GM12878 (cell line): ENCODE measurements at regions of chr4 and their contacts with region 1.

Region 1: DNA sequence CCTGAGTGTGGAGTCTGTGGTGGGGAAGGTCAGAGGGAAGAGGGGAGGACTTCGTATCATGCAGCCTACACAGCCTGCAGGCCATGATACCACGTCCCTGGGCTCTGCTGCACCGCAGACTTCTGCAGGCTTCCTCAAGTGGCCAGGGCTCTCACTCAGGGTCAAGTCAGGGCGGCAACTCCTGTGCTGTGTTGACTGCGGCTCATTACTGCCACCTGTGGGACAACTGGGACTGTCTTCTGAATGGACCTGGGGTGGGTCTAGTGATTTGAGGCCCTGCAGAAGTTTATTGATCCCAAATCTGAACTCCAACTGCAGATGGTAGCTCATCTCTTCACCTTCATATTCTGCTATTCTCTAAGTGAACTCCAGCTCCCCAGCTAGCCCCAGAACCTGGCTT is 167.1 kb downstream of the NSUN7 start:
- DNase-seq: no peak
- ATAC-seq: peak; percentile 97
- H3K4me3 ChIP-seq: no peak overlapping the region
- H3K27ac ChIP-seq: no peak overlapping the region
- H3K4me1 ChIP-seq: no peaks in the 10 kb centered on the region
- H3K27me3 ChIP-seq: no peaks in the 10 kb centered on the region; a peak in 1 of 4 replicates
- CTCF ChIP-seq: peak; percentile 43 to 64 (median 60)
- EP300 ChIP-seq: no peak
- POLR2A ChIP-seq: no peak
- RAD21 ChIP-seq: peak; percentile 42

Region 2: GRCh38 chr4:40736910-40737309 is 180.0 kb before region 1 on chr4:
- CTCF ChIA-PET with region 1: interaction called, 53 read pairs
- POLR2A ChIA-PET with region 1: no interaction called
- RAD21 ChIA-PET with region 1: no interaction called
- SMC1A ChIA-PET with region 1: interaction called, 4 read pairs
- in situ Hi-C with region 1: no loop called
- intact Hi-C with region 1: no loop called
- DNase-seq: no peak
- ATAC-seq: peak; percentile 84
- H3K4me3 ChIP-seq: no peak overlapping the region
- H3K27ac ChIP-seq: no peak overlapping the region
- H3K4me1 ChIP-seq: no peaks in the 10 kb centered on the region
- H3K27me3 ChIP-seq: no peaks in the 10 kb centered on the region
- CTCF ChIP-seq: peak; percentile 43 to 68 (median 47); a peak in 5 of 6 replicates
- EP300 ChIP-seq: no peak
- POLR2A ChIP-seq: no peak
- RAD21 ChIP-seq: peak; percentile 94

Region 3: DNA sequence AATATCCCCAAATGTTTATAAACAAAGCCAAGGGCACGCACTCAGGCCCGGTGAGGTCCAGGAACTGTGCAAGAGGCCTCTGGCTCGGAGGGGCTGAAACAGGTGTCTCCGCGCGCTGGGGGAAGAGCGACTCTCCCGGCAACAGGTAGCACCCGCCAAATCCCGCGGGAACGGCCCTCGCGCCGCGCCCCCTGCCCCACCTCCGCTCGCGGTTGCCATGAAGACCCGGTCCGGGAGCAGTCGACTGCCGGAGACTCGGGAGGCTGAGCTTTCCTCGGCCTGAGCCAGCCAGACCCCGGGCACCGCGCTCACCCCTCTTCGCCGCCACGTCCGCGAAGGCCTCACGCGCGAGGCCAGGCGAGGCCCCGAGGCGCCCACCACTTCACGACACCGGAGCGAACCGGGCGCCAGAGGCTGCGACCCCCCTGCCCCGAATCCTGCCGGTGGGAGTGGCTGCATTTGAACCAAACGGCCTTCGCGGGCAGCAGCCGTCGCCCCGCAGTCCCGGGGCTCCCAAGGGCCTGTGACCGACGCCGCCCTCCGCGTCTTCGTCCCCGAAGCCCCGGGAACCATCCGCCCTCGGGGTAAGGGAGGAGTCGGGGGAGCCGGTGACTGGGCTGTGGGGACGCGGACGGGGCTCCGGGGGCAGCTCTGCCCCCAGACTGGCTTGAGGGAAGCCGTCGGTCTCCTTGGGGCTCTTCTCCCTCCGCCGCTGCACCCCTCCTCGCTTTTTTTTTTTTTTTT is 167.0 kb before region 1 on chr4 and contains the start of gene NSUN7:
- CTCF ChIA-PET with region 1: no interaction called
- POLR2A ChIA-PET with region 1: no interaction called
- RAD21 ChIA-PET with region 1: no interaction called
- SMC1A ChIA-PET with region 1: no interaction called
- in situ Hi-C with region 1: no loop called
- intact Hi-C with region 1: no loop called
- DNase-seq: no peak
- ATAC-seq: peak; percentile 87
- H3K4me3 ChIP-seq: peak within 1 kb of the TSS; percentile 69; the same call in 1 of the 2 replicates
- H3K27ac ChIP-seq: no peak within 1 kb of the TSS
- H3K4me1 ChIP-seq: no peaks in the 10 kb centered on the region
- H3K27me3 ChIP-seq: peaks cover 0 to 1% of the 10 kb centered on the region in 2 experiments; a peak in 2 of 4 replicates
- CTCF ChIP-seq: no peak
- EP300 ChIP-seq: no peak
- POLR2A ChIP-seq: peak; percentile 38; the same call in 1 of the 2 replicates
- RAD21 ChIP-seq: no peak
- polyA plus RNA-seq, gene NSUN7: 0.02 to 0.08 TPM

Region 4: GRCh38 chr4:40940317-40940741 is 23.4 kb after region 1 on chr4:
- CTCF ChIA-PET with region 1: interaction called, 10 read pairs
- POLR2A ChIA-PET with region 1: no interaction called
- RAD21 ChIA-PET with region 1: interaction called, 3 read pairs
- SMC1A ChIA-PET with region 1: no interaction called
- in situ Hi-C with region 1: no loop called
- intact Hi-C with region 1: no loop called
- DNase-seq: no peak
- ATAC-seq: no peak
- H3K4me3 ChIP-seq: no peak overlapping the region
- H3K27ac ChIP-seq: no peak overlapping the region
- H3K4me1 ChIP-seq: no peaks in the 10 kb centered on the region
- H3K27me3 ChIP-seq: no peaks in the 10 kb centered on the region; a peak in 1 of 4 replicates
- CTCF ChIP-seq: no peak
- EP300 ChIP-seq: no peak
- POLR2A ChIP-seq: no peak
- RAD21 ChIP-seq: no peak